AG04450 (cell line): ENCODE measurements at regions of chr19 and their contacts with region 1.

Region 1: DNA sequence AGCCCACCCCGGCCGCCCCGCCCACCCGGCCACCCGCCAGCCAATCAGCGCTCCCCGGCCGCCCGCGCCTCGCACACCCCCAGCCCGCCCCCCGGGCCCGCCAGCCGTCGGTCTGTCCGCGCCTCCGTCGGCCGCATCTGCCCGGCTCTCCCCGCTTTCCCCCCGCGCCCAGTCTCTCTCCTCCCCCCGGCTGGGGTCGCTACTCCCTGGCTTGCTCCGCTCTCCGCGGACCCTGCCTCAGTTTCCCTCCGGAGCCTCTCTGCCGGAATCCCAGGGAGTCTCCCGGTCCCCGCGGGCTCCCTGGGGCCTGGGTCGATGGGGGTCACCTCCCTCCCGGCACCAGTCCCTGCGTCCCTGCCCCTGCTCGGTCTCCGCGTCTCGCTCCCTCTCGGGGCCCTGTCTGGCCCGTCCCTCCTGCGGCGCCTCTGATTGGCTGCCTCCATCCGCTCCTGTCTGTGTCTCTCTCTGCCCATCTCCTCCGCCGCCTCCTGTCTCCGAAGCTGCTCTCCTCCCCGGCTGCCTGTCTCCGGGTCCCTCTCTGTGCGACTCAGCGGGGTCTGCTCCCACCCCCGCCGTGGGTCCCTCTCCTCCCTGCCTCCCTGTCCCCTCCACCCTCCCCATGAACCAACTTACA is 475 bp downstream of the IL11 start:
- DNase-seq: peak; percentile 42
- H3K4me3 ChIP-seq: peak overlapping the region; percentile 76
- H3K27ac ChIP-seq: peak overlapping the region; percentile 85
- H3K27me3 ChIP-seq: no peaks in the 10 kb centered on the region
- CTCF ChIP-seq: no peak

Region 2: DNA sequence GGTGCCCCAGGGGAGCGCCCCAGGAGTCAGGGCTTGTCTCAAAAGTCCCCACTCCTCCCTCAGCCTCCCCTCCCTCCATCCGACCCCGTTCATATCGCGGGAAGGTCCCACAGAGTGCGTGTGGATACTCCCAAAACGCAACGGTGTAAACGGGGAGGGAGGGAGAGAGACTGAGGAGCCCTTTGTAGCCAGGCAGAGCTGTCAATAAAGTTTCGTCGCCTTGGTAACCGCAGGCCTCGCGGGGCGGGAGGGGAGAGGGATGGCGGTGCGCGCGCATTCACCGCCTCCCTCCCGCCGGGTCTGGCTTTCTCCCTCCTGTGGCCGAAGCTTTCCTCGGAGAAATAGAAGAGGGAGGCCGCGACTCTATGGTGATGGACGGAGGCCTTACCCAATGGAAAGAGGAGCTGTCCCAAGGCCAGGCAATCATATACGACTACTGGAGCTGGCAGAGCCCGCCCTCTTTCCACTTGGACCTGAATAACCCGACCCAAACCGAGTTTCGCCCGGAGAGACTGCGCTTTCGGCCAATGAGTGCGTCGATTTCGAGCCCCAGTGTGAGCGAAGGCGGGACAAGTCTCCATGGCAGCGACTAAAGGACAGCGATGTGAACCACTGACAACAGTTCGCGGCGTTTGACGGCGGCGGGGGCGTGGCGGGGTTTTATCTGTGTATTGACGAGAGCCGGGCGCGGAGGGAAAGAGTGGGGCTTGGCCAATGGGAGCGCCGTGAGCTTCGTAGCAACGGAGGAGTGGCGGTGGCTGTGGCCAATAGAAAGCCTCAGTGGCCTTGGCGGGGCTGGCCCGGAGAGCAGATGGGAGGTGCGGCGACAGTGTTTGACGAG is 30.5 kb before region 1 on chr19 and contains the start of gene KMT5C:
- CTCF ChIA-PET with region 1: no interaction called
- POLR2A ChIA-PET with region 1: interaction called, 20 read pairs
- DNase-seq: peak; percentile 100
- H3K4me3 ChIP-seq: peak within 1 kb of the TSS; percentile 79
- H3K27ac ChIP-seq: peak within 1 kb of the TSS; percentile 91
- H3K27me3 ChIP-seq: no peaks in the 10 kb centered on the region
- CTCF ChIP-seq: peak; percentile 43
- polyA plus RNA-seq, gene KMT5C: 2.6 and 3.7 TPM in 2 replicates

Region 3: DNA sequence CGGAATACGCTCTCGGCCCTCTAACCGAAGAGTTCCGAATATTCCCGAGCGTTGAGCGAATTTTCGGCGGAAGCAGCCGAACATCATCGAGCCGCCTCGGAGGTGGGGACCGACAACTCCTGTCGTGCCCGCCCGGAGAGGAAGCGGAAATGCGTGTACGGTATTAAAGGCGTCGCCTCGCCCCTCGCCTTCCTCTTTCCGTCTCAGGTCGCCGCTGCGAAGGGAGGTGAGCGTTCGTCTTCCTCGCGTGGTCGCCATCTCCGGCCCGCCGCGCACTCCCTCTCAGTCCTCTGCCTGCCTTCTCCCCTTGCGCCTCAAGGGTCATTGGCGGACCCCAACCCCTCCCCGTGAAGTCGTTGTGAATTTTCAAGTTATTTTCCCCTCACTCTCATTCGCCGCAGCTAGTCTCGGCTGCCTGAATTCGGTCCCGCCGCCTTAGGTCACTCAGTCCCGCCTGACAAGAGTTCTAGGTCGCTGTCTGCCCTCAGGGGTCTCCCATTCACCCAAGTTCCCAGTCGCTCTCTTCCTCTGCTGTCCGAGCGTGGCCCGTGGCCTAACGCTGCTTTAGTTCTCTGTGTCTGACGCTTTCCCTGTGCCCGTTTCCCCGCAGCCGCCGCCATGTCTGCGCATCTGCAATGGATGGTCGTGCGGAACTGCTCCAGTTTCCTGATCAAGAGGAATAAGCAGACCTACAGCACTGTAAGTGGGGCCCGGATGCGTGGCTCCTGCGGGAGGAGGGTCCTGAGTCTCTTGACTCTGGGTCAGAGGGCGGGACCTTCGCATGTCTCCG is 16.1 kb after region 1 on chr19 and contains the start of gene RPL28:
- CTCF ChIA-PET with region 1: no interaction called
- POLR2A ChIA-PET with region 1: interaction called, 24 read pairs
- DNase-seq: peak; percentile 95
- H3K4me3 ChIP-seq: peak within 1 kb of the TSS; percentile 99
- H3K27ac ChIP-seq: peak within 1 kb of the TSS; percentile 93
- H3K27me3 ChIP-seq: no peaks in the 10 kb centered on the region
- CTCF ChIP-seq: no peak
- polyA plus RNA-seq, gene RPL28: 325 and 535 TPM in 2 replicates